Cardiac septum (tissue), 1 donor: ENCODE measurements at regions of chr5 and their contacts with region 1.

Region 1: DNA sequence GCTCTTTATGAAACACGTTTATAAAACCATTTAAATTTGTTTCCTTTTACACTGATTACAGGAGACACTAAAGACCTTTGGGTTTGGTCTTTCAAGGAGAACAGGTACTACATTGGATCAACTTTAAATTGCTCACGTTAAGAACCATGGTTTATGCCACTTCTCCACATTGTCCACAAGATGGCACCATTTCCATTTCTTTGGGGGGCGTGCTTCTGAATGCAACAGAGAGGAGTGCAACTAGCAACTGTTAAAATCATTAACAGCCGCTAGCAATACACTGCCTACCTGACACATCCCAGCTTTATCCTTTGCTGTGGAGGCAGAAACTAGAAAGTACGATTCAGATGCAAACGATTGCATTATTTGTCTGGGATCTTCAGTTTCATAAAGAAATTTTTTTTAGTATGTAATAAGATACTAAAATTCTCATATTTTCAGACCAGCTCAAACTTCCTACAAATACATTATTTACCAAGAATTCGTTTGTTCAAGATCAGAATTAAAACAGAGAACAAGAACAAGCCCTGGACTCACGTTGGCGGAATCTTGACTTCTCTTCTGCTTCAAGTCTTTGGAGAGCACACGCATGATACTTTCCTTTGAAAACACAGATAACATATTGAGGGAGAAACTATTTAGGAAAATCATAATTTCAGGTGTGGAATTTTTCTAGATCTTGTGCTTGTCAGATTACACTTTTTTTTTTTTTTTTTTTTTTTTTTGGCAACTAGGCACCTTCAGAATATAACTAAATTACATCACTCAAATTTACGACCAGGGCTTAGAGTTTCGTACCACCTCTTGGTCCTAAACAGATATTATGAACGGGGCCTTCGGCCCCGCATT is 702 bp downstream of the CDC20B start:
- DNase-seq: no peak

Region 2: GRCh38 chr5:55232985-55233928 is 61.0 kb after region 1 on chr5 and contains the start of gene CCNO:
- intact Hi-C with region 1: loop called (anchors 1 kb)
- DNase-seq: no peak
- total RNA-seq, gene CCNO: 0.22 TPM

Region 3: DNA sequence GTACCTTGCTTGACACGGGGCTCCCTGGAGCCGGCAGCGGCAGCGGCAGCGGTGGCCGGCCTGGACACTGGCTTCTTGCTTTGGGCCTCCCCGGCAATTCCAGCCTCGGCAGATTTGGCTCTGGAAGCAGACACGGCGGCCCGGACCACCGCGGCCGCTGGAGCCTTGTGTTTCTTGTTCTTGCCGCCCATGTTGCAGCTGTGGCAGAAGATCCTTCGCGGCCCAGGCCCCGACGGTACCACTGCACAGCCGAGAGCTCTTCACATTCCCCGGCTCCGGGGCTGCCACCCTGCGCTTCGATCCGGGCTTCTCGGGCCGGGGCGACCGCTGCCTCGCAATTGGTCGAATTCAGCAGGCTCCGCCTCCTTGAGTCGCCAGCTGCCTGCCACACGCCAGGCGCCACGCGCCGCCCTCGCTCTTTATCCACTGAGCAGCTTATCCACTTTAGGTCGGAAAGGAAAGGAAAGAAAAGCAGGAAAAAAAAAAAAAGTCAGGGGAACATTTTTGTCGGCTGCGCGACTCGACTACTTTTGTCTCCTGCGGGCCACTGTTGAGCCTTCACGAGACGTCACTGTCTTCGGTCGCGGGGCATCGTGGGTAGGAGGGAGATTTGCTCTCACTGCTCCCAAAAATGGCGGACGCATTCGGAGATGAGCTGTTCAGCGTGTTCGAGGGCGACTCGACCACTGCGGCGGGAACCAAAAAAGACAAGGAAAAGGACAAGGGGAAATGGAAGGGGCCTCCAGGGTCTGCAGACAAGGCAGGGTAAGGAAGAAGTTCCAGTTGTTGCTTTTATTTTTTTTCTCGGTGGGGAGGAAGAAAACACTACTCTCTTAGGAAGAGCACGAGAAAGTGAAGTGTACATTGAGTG is 135.3 kb after region 1 on chr5 and contains the starts of genes DHX29 and MTREX:
- intact Hi-C with region 1: loop called (anchors 10 kb)
- DNase-seq: peak; percentile 97
- total RNA-seq, gene DHX29: 18.0 TPM
- total RNA-seq, gene MTREX: 52.4 TPM

Region 4: GRCh38 chr5:55711968-55712859 is 539.9 kb after region 1 on chr5 and contains the start of gene SLC38A9:
- intact Hi-C with region 1: loop called (anchors 10 kb)
- DNase-seq: peak; percentile 97
- total RNA-seq, gene SLC38A9: 6.8 TPM